ENCODE measurements at regions of chr1 and their contacts with region 1.

Region 1: GRCh38 chr1:94801919-94802546 is 18.1 kb upstream of the SLC44A3 start:
- DNase-seq: peak; percentile 79
- H3K4me3 ChIP-seq: peak overlapping the region in 2 of 3 experiments; percentile 6 to 20
- H3K27ac ChIP-seq: peak overlapping the region; percentile 75
- H3K4me1 ChIP-seq: peaks cover 47% of the 10 kb centered on the region
- H3K27me3 ChIP-seq: no peaks in the 10 kb centered on the region
- CTCF ChIP-seq: peak; percentile 61 to 68

Region 2: GRCh38 chr1:94045465-94046056 is 756.5 kb before region 1 on chr1:
- CTCF ChIA-PET with region 1: no interaction called
- dilution Hi-C with region 1: no loop called
- in situ Hi-C with region 1: loop called in 1 of 2 experiments (anchors 25 kb)
- intact Hi-C with region 1: loop called (anchors 1 kb)
- DNase-seq: peak; percentile 91
- H3K4me3 ChIP-seq: no peak overlapping the region
- H3K27ac ChIP-seq: no peak overlapping the region
- H3K4me1 ChIP-seq: peaks cover 16% of the 10 kb centered on the region
- H3K27me3 ChIP-seq: no peaks in the 10 kb centered on the region
- CTCF ChIP-seq: peak; percentile 81

Region 3: GRCh38 chr1:94417978-94418663 is 383.9 kb before region 1 on chr1 and contains the start of gene ABCD3:
- CTCF ChIA-PET with region 1: no interaction called
- dilution Hi-C with region 1: no loop called
- in situ Hi-C with region 1: no loop called
- intact Hi-C with region 1: loop called (anchors 5 kb)
- DNase-seq: peak; percentile 97
- H3K4me3 ChIP-seq: peak within 1 kb of the TSS; percentile 75 to 94 (median 91)
- H3K27ac ChIP-seq: peak within 1 kb of the TSS; percentile 91
- H3K4me1 ChIP-seq: peaks cover 37% of the 10 kb centered on the region
- H3K27me3 ChIP-seq: no peaks in the 10 kb centered on the region
- CTCF ChIP-seq: no peak
- total RNA-seq, gene ABCD3: 50.3 to 56.2 TPM

Region 4: DNA sequence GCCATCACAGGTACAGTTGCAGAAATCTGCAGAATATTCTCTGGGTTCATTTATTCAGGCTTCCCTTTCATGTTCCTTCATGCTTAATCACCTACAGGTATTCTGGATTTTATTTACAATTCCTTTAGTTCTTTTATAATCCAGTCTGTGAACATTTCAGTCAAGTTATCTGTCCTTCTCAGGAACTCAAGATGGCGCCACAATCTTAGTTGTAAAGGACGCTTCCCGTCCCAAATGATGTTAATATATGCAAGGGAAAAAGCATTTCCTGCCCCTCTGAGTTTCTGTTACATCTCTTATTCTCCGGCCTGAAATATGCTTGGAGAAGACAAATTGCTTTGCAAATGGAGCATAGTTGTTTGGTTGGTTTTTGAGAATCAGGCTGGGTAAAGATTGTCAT is 279.7 kb before region 1 on chr1:
- CTCF ChIA-PET with region 1: no interaction called
- dilution Hi-C with region 1: no loop called
- in situ Hi-C with region 1: loop called (anchors 5 kb)
- intact Hi-C with region 1: loop called (anchors 1 kb)
- DNase-seq: peak; percentile 48
- H3K4me3 ChIP-seq: no peak overlapping the region
- H3K27ac ChIP-seq: no peak overlapping the region
- H3K4me1 ChIP-seq: no peaks in the 10 kb centered on the region
- H3K27me3 ChIP-seq: no peaks in the 10 kb centered on the region
- CTCF ChIP-seq: peak; percentile 43 to 57

Region 5: GRCh38 chr1:94599095-94599813 is 202.8 kb before region 1 on chr1:
- CTCF ChIA-PET with region 1: interaction called, 6 read pairs
- dilution Hi-C with region 1: no loop called
- in situ Hi-C with region 1: no loop called
- intact Hi-C with region 1: loop called (anchors 1 kb)
- DNase-seq: peak; percentile 57
- H3K4me3 ChIP-seq: no peak overlapping the region
- H3K27ac ChIP-seq: no peak overlapping the region
- H3K4me1 ChIP-seq: peaks cover 30% of the 10 kb centered on the region
- H3K27me3 ChIP-seq: no peaks in the 10 kb centered on the region
- CTCF ChIP-seq: peak; percentile 62 to 85

Region 6: DNA sequence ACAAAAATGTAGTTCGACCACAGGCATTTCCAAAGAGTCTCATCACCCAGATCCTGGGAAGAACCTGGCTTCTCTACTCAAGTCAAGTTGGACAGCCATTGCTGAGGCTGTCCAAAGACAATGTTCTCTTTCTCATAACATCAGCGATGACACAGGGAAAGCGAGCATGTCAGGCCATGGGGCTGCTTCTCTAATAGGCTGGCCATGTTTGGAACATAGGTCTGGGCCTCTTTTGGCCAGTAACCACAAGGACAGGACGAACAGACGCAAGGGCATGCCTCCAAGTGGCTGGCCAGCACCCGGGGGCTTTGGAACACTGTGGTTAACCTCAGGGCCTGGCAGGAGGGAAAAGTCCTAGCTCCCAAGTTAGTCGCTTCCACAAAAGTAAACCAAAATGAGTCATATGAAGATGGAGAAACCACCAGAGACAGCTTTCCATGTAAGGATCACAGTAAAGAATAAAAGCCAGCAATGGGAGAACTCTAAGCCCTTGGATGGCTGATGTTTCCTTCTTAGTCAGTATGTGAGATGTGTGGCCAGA is 62.4 kb before region 1 on chr1:
- CTCF ChIA-PET with region 1: no interaction called
- dilution Hi-C with region 1: no loop called
- in situ Hi-C with region 1: no loop called
- intact Hi-C with region 1: loop called (anchors 1 kb)
- DNase-seq: peak; percentile 95
- H3K4me3 ChIP-seq: no peak overlapping the region
- H3K27ac ChIP-seq: peak overlapping the region; percentile 65
- H3K4me1 ChIP-seq: peaks cover 67% of the 10 kb centered on the region
- H3K27me3 ChIP-seq: no peaks in the 10 kb centered on the region
- CTCF ChIP-seq: no peak

Measured in mammary epithelial cell (primary cell).